ENCODE measurements at regions of chr10 and their contacts with region 1.

Region 1: GRCh38 chr10:110803830-110804338 is 67.8 kb upstream of the PDCD4 start:
- DNase-seq: peak; percentile 47
- ATAC-seq: peak; percentile 85
- H3K4me3 ChIP-seq: no peak overlapping the region
- H3K27ac ChIP-seq: peak overlapping the region; percentile 91
- H3K4me1 ChIP-seq: peaks cover 33% of the 10 kb centered on the region
- H3K27me3 ChIP-seq: no peaks in the 10 kb centered on the region
- CTCF ChIP-seq: peak; percentile 76 to 83 (median 81)
- EP300 ChIP-seq: no peak
- POLR2A ChIP-seq: peak; percentile 25; the same call in 1 of the 2 replicates
- RAD21 ChIP-seq: peak; percentile 90

Region 2: GRCh38 chr10:110774069-110775019 is 29.5 kb before region 1 on chr10:
- CTCF ChIA-PET with region 1: interaction called, 72 read pairs
- POLR2A ChIA-PET with region 1: interaction called, 46 read pairs
- RAD21 ChIA-PET with region 1: interaction called, 135 read pairs
- SMC1A ChIA-PET with region 1: interaction called, 327 read pairs
- in situ Hi-C with region 1: no loop called
- intact Hi-C with region 1: loop called (anchors 1 kb)
- DNase-seq: peak; percentile 99
- ATAC-seq: peak; percentile 94
- H3K4me3 ChIP-seq: no peak overlapping the region
- H3K27ac ChIP-seq: peak overlapping the region; percentile 85
- H3K4me1 ChIP-seq: peaks cover 22% of the 10 kb centered on the region
- H3K27me3 ChIP-seq: no peaks in the 10 kb centered on the region
- CTCF ChIP-seq: no peak
- EP300 ChIP-seq: peak; percentile 100
- POLR2A ChIP-seq: peak; percentile 38; the same call in 1 of the 2 replicates
- RAD21 ChIP-seq: no peak

Region 3: GRCh38 chr10:110834629-110835301 is 30.9 kb after region 1 on chr10:
- CTCF ChIA-PET with region 1: interaction called, 31 read pairs
- POLR2A ChIA-PET with region 1: interaction called, 9 read pairs
- RAD21 ChIA-PET with region 1: interaction called, 20 read pairs
- SMC1A ChIA-PET with region 1: interaction called, 147 read pairs
- in situ Hi-C with region 1: no loop called
- intact Hi-C with region 1: no loop called
- DNase-seq: no peak
- ATAC-seq: no peak
- H3K4me3 ChIP-seq: no peak overlapping the region
- H3K27ac ChIP-seq: no peak overlapping the region
- H3K4me1 ChIP-seq: no peaks in the 10 kb centered on the region
- H3K27me3 ChIP-seq: no peaks in the 10 kb centered on the region
- CTCF ChIP-seq: no peak
- EP300 ChIP-seq: no peak
- POLR2A ChIP-seq: no peak
- RAD21 ChIP-seq: no peak

Region 4: DNA sequence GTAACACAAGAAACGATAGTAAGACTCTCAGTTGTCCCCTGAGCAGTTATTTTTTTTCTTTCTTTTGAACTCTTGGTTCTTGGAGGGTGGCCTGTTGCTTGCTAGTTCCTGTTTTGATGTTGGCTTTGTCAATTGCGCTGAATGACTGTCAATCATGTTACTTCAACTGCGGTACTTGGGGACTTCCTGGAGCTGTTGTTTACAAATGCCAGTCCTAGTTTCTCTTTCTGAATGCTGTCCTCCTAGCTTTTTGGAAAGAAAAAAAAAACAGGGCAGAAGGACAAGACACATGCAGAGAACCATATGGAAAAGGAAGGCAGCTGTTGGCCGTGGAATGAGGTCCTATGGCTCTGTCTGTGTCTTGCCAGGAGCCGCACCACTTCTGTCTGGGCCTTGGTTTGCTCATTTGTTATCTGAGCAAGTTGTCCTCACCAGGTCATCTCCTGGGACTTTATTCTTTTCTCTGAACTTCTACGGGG is 60.8 kb after region 1 on chr10:
- CTCF ChIA-PET with region 1: interaction called, 53 read pairs
- POLR2A ChIA-PET with region 1: interaction called, 30 read pairs
- RAD21 ChIA-PET with region 1: interaction called, 77 read pairs
- SMC1A ChIA-PET with region 1: interaction called, 80 read pairs
- in situ Hi-C with region 1: no loop called
- intact Hi-C with region 1: no loop called
- DNase-seq: peak; percentile 97
- ATAC-seq: peak; percentile 61
- H3K4me3 ChIP-seq: peak overlapping the region; percentile 62; the same call in 1 of the 2 replicates
- H3K27ac ChIP-seq: peak overlapping the region; percentile 99
- H3K4me1 ChIP-seq: peaks cover 93% of the 10 kb centered on the region
- H3K27me3 ChIP-seq: no peaks in the 10 kb centered on the region
- CTCF ChIP-seq: no peak
- EP300 ChIP-seq: peak; percentile 16 to 71; a peak in 1 of 4 replicates
- POLR2A ChIP-seq: no peak
- RAD21 ChIP-seq: 0 out of 2 replicates have a peak, but pooled peaks have one; percentile 5

Region 5: GRCh38 chr10:110901954-110902819 is 98.3 kb after region 1 on chr10:
- CTCF ChIA-PET with region 1: interaction called, 196 read pairs
- POLR2A ChIA-PET with region 1: interaction called, 5 read pairs
- RAD21 ChIA-PET with region 1: interaction called, 115 read pairs
- SMC1A ChIA-PET with region 1: interaction called, 221 read pairs
- in situ Hi-C with region 1: no loop called
- intact Hi-C with region 1: no loop called
- DNase-seq: no peak
- ATAC-seq: peak; percentile 49
- H3K4me3 ChIP-seq: no peak overlapping the region
- H3K27ac ChIP-seq: no peak overlapping the region
- H3K4me1 ChIP-seq: peaks cover 7% of the 10 kb centered on the region; the same call in 1 of the 2 replicates
- H3K27me3 ChIP-seq: no peaks in the 10 kb centered on the region
- CTCF ChIP-seq: no peak
- EP300 ChIP-seq: no peak
- POLR2A ChIP-seq: peak; percentile 12; the same call in 1 of the 2 replicates
- RAD21 ChIP-seq: no peak